ENCODE measurements at regions of chr7 and their contacts with region 1.

Region 1: GRCh38 chr7:123367484-123368122 is 166.8 kb downstream of the IQUB start:
- DNase-seq: no peak
- ATAC-seq: no peak

Region 2: GRCh38 chr7:123208793-123209192 is 158.8 kb before region 1 on chr7:
- intact Hi-C with region 1: loop called (anchors 2 kb)
- DNase-seq: no peak
- ATAC-seq: no peak

Region 3: GRCh38 chr7:123397746-123398338 is 30.2 kb after region 1 on chr7:
- intact Hi-C with region 1: no loop called
- DNase-seq: no peak
- ATAC-seq: no peak

Measured in Right ventricle myocardium inferior (tissue), 1 donor.